HepG2 (cell line): ENCODE measurements at regions of chr9 and their contacts with region 1.

Region 1: DNA sequence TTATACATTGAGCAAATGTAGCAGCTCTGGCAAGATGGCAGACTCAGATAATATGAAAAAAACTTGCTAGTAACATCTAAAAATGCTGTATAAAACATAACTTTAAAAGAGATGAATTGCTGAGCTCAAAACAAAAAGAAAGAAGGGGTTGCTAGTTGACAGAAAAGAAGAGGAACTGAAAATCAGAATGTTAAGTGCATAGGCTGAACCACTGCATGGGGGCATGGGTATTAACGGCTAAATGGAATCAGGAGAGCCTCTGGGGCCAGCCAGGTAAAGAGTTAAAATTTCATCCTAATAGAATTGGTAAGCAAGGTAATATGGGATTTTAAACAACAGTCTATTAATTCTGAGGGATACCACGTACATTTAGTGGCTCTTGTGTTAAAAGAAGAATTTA is 146.8 kb downstream of the SMC2 start:
- DNase-seq: no peak
- ATAC-seq: no peak
- H3K4me3 ChIP-seq: no peak overlapping the region
- H3K27ac ChIP-seq: no peak overlapping the region
- H3K4me1 ChIP-seq: peaks cover 7% of the 10 kb centered on the region; the same call in 1 of the 2 replicates
- H3K27me3 ChIP-seq: no peaks in the 10 kb centered on the region
- CTCF ChIP-seq: no peak
- EP300 ChIP-seq: no peak
- POLR2A ChIP-seq: no peak
- RAD21 ChIP-seq: no peak

Region 2: DNA sequence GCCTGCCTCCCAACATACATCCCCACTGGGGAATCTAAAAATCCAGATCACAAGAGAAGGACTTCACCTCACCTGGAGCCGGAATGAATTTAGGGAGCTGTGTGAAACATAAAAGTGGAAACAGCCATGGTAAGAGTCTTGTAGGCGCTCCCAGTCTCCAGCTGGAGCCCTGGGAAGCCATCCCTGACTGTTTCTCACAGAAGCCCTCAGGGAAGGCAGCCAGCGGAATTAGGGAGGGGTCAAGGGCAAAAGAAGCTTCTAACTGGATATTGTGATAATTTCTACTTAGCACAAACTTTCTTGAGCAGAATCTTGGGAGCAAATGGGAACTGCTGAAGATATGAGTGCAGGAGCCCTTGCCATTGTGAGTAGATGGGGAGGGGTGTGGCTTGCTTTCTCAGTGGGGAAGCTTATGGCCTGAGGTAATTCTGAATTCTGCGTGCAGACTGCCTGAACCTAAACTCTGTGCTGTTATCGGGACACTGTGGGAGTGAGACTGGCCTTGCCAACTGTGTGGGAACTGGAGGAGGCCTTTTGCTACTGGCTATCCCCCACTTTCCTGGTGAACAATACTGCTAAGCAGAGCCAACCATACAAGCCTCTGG is 321.2 kb before region 1 on chr9:
- CTCF ChIA-PET with region 1: no interaction called
- POLR2A ChIA-PET with region 1: no interaction called
- in situ Hi-C with region 1: no loop called
- intact Hi-C with region 1: loop called (anchors 5 kb)
- DNase-seq: no peak
- ATAC-seq: no peak
- H3K4me3 ChIP-seq: no peak overlapping the region
- H3K27ac ChIP-seq: no peak overlapping the region
- H3K4me1 ChIP-seq: no peaks in the 10 kb centered on the region
- H3K27me3 ChIP-seq: no peaks in the 10 kb centered on the region
- CTCF ChIP-seq: no peak
- EP300 ChIP-seq: no peak
- POLR2A ChIP-seq: no peak
- RAD21 ChIP-seq: no peak